ENCODE measurements at regions of chr10 and their contacts with region 1.

Region 1: GRCh38 chr10:6678211-6678803 is 98.2 kb upstream of the PRKCQ start:
- DNase-seq: peak; percentile 70
- ATAC-seq: peak; percentile 69
- H3K4me3 Mint-ChIP-seq: no peak overlapping the region
- H3K27ac Mint-ChIP-seq: no peak overlapping the region
- H3K4me1 Mint-ChIP-seq: peaks cover 10% of the 10 kb centered on the region
- H3K27me3 Mint-ChIP-seq: peaks cover 60% of the 10 kb centered on the region

Region 2: DNA sequence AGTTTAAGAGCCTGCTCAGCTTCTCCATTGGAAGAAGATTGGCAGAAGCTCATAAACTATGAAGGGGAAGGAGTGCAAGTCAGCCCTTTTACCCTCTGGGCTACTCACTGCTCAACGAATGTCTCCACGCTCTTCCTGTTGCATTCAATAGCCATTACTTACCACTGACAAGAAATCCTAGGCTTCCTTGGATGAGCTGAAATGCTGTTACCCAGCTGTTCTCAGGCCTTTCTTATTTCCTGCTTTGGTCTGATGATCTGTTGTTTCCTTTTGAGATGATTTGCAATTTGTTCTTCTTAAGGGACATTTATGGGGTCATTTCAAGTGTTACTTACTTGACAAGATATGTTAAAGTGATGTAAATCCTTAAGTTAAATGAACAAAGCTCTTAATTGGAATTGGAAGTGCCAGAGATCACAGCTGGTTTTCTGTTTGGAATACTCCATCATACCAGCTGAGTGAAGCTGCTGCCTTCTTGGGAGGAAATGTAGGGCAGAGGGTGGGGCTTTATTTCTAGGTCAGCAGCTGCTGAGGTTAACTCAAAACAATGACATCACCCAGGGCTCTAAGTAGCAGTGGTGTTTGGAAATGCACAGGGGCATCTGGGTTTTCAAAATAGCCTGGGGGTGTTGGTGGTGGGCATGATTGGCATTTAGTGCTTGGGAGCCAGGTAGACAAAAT is 268.2 kb before region 1 on chr10:
- CTCF ChIA-PET with region 1: interaction called, 18 read pairs
- DNase-seq: peak; percentile 73
- ATAC-seq: peak; percentile 94
- H3K4me3 Mint-ChIP-seq: peak overlapping the region; percentile 41
- H3K27ac Mint-ChIP-seq: peak overlapping the region; percentile 78
- H3K4me1 Mint-ChIP-seq: peaks cover 43% of the 10 kb centered on the region
- H3K27me3 Mint-ChIP-seq: peaks cover 2% of the 10 kb centered on the region

Region 3: GRCh38 chr10:7025296-7025695 is 347.0 kb after region 1 on chr10:
- CTCF ChIA-PET with region 1: no interaction called
- DNase-seq: no peak
- ATAC-seq: no peak
- H3K4me3 Mint-ChIP-seq: no peak overlapping the region
- H3K27ac Mint-ChIP-seq: no peak overlapping the region
- H3K4me1 Mint-ChIP-seq: peaks cover 40% of the 10 kb centered on the region
- H3K27me3 Mint-ChIP-seq: no peaks in the 10 kb centered on the region

Region 4: DNA sequence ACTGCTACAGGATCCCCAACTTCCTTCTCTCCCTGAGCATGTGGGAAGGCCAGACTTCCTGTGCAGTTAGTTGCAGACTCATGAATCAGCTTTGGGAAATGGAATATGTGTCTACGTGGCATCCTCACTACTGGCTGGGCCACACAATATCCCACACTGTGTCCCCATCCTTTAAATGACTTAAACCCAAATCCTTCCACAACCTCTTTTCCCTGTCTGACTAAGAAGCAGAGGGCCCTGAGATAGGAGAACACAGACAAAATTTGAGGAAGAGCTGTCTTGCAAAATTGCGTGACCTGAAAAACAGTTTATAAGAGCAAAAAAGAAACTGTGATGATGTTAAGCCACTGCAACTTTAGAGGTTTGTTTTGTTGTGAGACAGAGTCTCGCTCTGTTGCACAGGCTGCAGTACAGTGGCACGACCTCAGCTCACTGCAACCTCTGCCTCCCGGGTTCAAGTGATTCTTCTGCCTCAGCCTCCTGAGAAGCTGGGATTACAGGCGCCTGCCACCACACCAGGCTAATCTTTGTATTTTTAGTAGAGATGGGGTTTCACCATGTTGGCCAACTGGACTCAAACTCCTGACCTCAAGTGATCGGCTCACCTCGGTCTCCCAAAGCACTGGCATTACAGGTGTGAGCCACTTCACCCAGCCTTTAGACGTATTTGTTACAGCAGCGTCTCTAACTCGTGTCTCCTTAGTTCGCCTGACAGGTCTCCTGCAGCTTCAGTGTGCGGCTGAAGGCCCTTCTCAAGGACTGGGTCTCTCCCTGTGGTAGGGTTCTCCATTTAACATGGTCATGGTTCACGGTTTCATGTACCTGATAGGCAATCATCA is 779.4 kb after region 1 on chr10:
- CTCF ChIA-PET with region 1: no interaction called
- DNase-seq: no peak
- ATAC-seq: no peak
- H3K4me3 Mint-ChIP-seq: no peak overlapping the region
- H3K27ac Mint-ChIP-seq: no peak overlapping the region
- H3K4me1 Mint-ChIP-seq: no peaks in the 10 kb centered on the region
- H3K27me3 Mint-ChIP-seq: peaks cover 3% of the 10 kb centered on the region